ENCODE measurements at regions of chr20 and their contacts with region 1.

Region 1: GRCh38 chr20:36154700-36155628 is at the start of gene EPB41L1:
- DNase-seq: no peak
- ATAC-seq: no peak
- total RNA-seq, gene EPB41L1: 19.6 TPM

Region 2: DNA sequence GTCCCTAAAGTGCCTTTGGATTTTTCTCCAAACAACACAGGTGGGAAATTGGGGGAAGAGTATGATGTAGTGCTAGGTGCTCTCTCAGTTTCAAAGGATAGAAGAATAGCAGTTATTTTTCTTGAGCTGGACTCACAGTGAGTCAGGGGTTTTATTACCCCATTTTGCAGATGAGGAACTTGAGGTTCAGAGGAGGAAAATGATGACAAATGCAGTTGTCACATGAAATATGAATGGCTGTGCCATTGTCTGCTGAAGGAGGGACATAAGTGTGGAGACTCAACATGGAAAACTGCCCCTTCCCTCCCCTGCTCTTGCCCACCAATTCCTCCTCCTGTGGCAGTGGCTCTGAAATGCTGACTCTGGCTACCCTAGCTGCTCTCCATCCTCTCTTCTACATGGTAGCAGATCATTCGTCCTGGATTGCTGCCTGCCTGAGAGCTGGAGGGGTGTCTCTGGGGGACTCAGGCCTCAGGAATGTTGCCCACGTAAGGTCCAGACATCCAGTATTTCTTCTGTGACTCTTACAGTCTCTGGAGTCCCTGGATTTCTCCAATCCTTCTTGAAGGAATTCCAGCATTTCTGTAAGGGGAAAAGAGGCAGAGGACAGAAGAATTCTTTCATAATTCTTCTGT is 38.0 kb before region 1 on chr20:
- intact Hi-C with region 1: no loop called
- DNase-seq: no peak
- ATAC-seq: no peak

Region 3: GRCh38 chr20:36199345-36200257 is 44.6 kb after region 1 on chr20:
- intact Hi-C with region 1: loop called (anchors 5 kb)
- DNase-seq: peak; percentile 77
- ATAC-seq: peak; percentile 82

Region 4: GRCh38 chr20:36259177-36260061 is 104.5 kb after region 1 on chr20:
- intact Hi-C with region 1: no loop called
- DNase-seq: no peak
- ATAC-seq: no peak

Region 5: GRCh38 chr20:36331006-36331608 is 176.1 kb after region 1 on chr20:
- intact Hi-C with region 1: no loop called
- DNase-seq: no peak
- ATAC-seq: no peak

Measured in left ventricle myocardium superior (tissue), 1 donor.